GM10248 (cell line): ENCODE measurements at regions of chr1 and their contacts with region 1.

Region 1: DNA sequence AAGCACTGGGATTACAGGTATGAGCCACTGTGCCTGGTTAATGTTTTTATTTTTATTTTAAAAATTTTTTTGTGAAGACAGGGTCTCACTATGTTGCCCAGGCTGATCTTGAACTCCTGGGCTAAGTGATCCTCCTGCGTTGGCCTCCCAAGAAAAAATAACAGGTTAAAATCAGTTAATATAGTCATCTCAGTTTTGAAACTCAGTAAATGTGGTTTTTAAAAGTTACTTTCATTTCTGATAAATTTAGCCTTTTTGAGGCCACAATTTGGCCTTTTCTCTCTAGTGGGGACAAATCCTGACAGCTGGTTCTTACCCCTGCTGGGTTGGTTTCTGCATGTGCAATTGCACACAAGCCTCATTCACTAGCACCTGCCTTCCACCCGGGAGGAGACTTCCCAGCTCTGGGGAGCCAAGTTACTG is 13.3 kb downstream of the PMF1 start:
- DNase-seq: peak; percentile 75
- CTCF ChIP-seq: no peak

Region 2: GRCh38 chr1:156090822-156091188 is 135.3 kb before region 1 on chr1:
- CTCF ChIA-PET with region 1: interaction called, 35 read pairs
- POLR2A ChIA-PET with region 1: no interaction called
- DNase-seq: peak; percentile 86
- CTCF ChIP-seq: peak; percentile 71

Region 3: GRCh38 chr1:156146020-156146768 is 79.9 kb before region 1 on chr1:
- CTCF ChIA-PET with region 1: interaction called, 306 read pairs
- POLR2A ChIA-PET with region 1: interaction called, 3 read pairs
- DNase-seq: peak; percentile 81
- CTCF ChIP-seq: peak; percentile 69

Region 4: DNA sequence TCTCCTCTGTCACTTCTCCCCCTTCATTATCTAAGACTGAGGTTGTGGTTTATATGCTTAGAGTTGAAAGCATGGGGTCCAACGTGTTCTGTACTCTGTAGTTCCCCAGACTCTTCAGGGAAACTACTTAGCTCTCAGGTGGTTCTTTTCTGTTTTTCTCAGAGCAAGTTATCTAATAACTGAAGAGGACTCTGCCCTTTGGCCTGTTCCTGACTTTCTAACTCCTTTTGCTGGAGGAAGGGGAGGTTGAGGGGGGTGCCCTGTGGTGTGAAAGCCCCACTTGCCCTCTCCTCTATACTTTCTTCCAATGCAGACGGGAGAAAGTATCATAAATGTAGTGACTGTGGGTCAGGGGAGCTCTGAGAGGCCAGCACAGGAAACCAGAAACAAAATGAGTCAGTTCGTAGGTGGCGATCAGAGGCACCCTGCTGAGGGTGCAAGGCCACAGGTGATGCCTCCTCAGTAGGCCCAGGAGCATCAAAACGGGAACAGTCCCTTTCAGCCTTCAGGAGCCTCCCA is 27.2 kb before region 1 on chr1:
- CTCF ChIA-PET with region 1: interaction called, 27 read pairs
- POLR2A ChIA-PET with region 1: interaction called, 4 read pairs
- DNase-seq: peak; percentile 52
- CTCF ChIP-seq: no peak

Region 5: GRCh38 chr1:156245451-156246232 is 19.5 kb after region 1 on chr1:
- CTCF ChIA-PET with region 1: interaction called, 34 read pairs
- POLR2A ChIA-PET with region 1: no interaction called
- DNase-seq: peak; percentile 67
- CTCF ChIP-seq: no peak

Region 6: GRCh38 chr1:156289857-156290256 is 63.7 kb after region 1 on chr1:
- CTCF ChIA-PET with region 1: no interaction called
- POLR2A ChIA-PET with region 1: no interaction called
- DNase-seq: no peak
- CTCF ChIP-seq: no peak

Region 7: GRCh38 chr1:156319664-156320063 is 93.5 kb after region 1 on chr1:
- CTCF ChIA-PET with region 1: interaction called, 17 read pairs
- POLR2A ChIA-PET with region 1: no interaction called
- DNase-seq: peak; percentile 35
- CTCF ChIP-seq: peak; percentile 35

Region 8: DNA sequence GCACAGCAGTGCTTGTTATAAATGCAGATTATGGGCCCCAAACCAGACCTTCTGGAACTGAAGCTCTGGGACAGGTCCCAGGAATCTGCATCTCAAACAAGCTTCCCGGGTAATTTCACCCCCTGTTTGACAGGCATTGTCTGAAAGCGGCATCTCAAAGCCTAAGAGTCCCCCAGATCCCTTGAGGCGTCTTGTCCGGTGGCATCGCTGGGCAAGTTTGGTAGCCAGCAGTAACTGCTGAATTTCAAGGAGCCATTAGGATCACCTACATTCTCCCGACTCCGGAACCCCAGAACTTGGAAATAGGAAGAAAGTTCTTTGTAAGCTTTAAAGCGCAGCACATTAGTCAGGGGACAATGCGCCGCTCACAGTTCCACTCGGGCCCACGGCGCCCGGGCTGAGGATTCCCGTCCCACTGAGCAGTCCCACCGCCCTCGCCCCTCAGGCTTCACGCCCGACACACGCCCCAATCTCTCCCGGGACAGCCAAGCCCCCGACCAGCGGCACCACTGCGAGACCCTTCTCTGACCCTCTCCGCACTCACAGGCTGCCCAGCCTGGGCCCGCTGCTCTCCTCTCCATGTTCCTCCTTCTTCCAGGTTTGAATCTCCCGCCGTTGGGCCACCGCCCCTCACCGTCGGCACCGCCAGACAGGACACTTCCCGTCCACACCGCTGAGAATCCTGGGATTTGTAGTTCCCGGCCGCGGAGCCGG is 346.0 kb after region 1 on chr1 and contains the start of gene IQGAP3:
- CTCF ChIA-PET with region 1: no interaction called
- POLR2A ChIA-PET with region 1: no interaction called
- DNase-seq: peak; percentile 93
- CTCF ChIP-seq: no peak